Breast epithelium (tissue), 4 donors: ENCODE measurements at regions of chr7 and their contacts with region 1.

Region 1: GRCh38 chr7:40474790-40475680 is 340.2 kb downstream of the SUGCT start:
- DNase-seq: no peak
- H3K4me3 ChIP-seq: no peak overlapping the region
- H3K27ac ChIP-seq: no peak overlapping the region
- H3K4me1 ChIP-seq: no peaks in the 10 kb centered on the region
- H3K27me3 ChIP-seq: no peaks in the 10 kb centered on the region
- CTCF ChIP-seq: no peak
- POLR2A ChIP-seq: no peak

Region 2: DNA sequence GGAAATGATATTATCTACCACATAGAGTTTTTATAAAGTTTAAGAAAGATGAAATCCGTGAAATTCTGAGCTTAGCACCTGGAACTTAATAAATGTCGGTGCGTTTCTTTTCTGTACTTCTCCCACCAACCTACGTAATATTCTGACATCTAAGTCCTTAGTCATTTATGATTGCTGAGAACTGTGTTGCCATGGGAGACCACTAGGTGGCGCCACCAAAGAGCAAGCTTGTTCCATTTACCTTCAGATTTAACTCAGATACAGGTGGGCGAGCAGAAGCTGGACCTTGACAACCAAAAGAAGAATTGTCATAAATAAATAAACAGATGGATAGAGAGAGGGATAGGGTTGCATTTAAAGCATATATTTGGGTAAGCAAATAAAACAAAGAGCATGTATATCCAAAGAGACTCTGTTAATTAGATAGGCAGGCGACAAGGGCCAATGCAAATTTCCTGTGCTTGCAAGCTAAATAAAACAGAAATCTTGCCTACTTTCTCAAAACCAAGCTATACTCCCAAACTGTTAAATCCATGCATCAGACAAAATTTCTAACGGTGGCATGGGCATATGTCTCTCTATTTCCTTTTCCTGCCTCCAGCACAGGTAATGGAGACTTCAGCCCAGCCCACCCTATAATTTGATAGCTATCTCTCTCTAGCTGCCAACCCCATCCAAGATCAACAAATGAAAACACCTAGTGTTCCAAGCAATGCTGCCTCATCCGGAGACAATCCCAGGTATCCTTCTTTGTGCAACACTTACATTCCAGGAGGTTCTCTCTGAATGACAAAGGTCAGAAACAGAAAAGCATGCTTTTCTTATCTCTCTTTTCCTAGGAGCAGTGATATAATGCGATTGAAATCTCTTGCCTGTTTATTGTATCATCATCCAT is 528.2 kb after region 1 on chr7:
- intact Hi-C with region 1: loop called (anchors 10 kb)
- DNase-seq: no peak
- H3K4me3 ChIP-seq: no peak overlapping the region
- H3K27ac ChIP-seq: no peak overlapping the region
- H3K4me1 ChIP-seq: no peaks in the 10 kb centered on the region
- H3K27me3 ChIP-seq: no peaks in the 10 kb centered on the region
- CTCF ChIP-seq: peak in 1 of 3 donors; percentile 18
- POLR2A ChIP-seq: no peak